ENCODE measurements at regions of chr7 and their contacts with region 1.

Region 1: DNA sequence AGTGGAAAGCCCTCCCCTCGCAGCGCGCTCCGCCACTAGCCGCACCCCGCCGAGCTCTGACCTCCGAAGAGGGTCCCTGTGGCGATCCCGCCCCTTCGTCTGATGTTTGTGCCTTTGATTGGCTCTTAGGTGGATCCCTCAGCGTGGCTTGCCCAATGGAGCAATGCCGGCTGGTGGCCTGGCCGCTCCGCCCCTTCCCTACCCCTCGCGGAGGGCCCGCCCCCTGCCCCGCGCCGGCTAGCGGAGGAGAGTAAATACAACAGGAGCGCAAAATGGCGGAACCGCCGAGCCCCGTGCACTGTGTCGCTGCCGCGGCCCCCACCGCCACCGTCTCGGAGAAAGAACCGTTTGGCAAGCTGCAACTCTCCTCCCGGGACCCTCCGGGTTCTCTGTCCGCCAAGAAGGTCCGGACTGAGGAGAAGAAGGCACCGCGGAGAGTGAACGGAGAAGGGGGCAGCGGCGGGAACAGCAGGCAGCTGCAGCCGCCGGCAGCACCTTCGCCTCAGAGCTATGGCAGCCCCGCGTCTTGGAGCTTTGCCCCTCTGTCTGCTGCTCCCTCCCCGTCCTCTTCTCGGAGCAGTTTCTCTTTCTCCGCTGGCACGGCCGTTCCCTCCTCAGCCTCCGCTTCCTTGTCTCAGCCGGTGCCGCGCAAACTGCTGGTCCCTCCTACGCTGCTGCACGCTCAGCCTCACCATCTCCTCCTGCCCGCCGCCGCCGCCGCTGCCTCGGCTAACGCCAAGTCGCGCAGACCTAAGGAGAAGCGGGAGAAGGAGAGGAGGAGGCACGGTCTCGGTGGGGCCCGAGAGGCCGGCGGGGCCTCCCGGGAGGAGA is at the start of gene RSBN1L:
- DNase-seq: peak; percentile 99
- ATAC-seq: peak; percentile 99 to 100 (median 99)
- H3K4me3 ChIP-seq: peak within 1 kb of the TSS; percentile 79 to 100 (median 97)
- H3K27ac ChIP-seq: peak within 1 kb of the TSS; percentile 88 to 98 (median 96)
- H3K4me1 ChIP-seq: peaks cover 0 to 57% (median 34%) of the 10 kb centered on the region in 12 donors
- H3K27me3 ChIP-seq: no peaks in the 10 kb centered on the region
- CTCF ChIP-seq: peak in 9 of 12 donors; percentile 22 to 65 (median 46)
- POLR2A ChIP-seq: peak; percentile 74 to 93
- total RNA-seq, gene RSBN1L: 5.6 to 12.1 (median 9.9) TPM

Region 2: DNA sequence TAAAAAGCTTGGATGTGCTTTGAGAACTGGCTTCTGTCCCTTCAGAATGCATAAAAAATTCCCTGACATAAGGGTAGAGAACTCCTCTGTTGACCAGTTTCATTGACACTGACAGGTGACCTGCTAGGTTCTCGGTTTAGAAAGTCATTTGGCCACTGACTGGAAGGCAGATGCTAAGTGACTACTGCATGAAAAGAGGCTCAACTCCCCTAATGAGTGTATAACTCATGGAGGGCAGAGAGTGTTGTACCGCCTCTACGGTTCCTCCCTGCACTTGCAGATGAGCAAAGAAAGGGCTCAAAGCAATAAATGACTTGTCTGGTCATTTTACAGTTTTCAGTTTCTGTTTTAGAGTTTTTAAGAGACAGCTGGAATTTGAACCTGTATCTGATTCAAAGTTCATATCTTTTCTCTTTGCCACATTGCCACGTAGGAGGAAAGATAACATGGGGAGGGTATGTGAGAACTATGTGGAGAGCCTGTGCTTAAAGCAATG is 493.9 kb before region 1 on chr7:
- intact Hi-C with region 1: no loop called
- DNase-seq: no peak
- ATAC-seq: no peak
- H3K4me3 ChIP-seq: no peak overlapping the region
- H3K27ac ChIP-seq: no peak overlapping the region
- H3K4me1 ChIP-seq: peaks cover 0 to 31% (median 1%) of the 10 kb centered on the region in 12 donors
- H3K27me3 ChIP-seq: no peaks in the 10 kb centered on the region
- CTCF ChIP-seq: no peak
- POLR2A ChIP-seq: no peak

Region 3: DNA sequence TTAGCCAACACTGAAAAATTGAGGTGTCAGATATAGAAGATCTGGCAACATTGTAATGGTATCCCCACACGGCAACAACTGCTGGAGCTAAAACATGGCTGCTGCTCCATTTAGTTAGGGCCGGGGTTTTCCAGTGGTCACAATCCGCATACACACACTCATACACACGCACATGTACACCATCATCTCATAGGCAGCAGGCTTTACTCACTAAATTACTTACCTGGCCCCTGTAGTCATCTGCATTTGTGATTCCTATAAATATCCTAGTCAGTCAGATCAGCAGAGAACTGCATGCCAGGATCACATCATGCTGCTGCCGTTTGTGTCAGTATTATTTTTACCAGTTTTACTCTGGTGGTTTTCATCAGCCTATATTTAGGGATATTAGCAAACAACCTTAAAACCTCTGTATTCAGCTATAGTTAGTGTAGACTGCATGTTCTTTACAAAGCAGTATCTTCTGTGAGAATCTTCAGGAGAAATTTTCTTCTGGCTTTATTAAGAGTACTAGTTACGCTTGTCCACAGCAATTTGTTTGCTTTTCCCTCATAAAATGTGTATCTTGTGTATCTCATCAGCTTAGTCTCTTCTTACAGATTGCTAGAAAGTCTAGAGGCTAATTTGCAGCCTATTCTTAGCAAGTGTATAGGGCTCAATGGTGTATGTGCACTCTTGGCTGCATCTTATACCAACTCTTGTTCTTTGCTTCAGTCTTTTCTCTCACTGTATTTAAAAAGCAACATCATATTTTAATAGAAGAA is 197.6 kb before region 1 on chr7:
- intact Hi-C with region 1: no loop called
- DNase-seq: no peak
- ATAC-seq: peak in 2 of 4 donors; percentile 20 to 38
- H3K4me3 ChIP-seq: no peak overlapping the region
- H3K27ac ChIP-seq: no peak overlapping the region
- H3K4me1 ChIP-seq: peaks cover 0 to 15% (median 3%) of the 10 kb centered on the region in 12 donors
- H3K27me3 ChIP-seq: no peaks in the 10 kb centered on the region
- CTCF ChIP-seq: no peak
- POLR2A ChIP-seq: no peak

Region 4: GRCh38 chr7:77550586-77550985 is 145.8 kb before region 1 on chr7:
- intact Hi-C with region 1: no loop called
- DNase-seq: no peak
- ATAC-seq: no peak
- H3K4me3 ChIP-seq: no peak overlapping the region
- H3K27ac ChIP-seq: peak overlapping the region in 1 of 12 donors; percentile 11
- H3K4me1 ChIP-seq: peaks cover 0 to 88% (median 40%) of the 10 kb centered on the region in 12 donors
- H3K27me3 ChIP-seq: no peaks in the 10 kb centered on the region
- CTCF ChIP-seq: no peak
- POLR2A ChIP-seq: no peak

Region 5: GRCh38 chr7:77606562-77606961 is 89.9 kb before region 1 on chr7:
- intact Hi-C with region 1: no loop called
- DNase-seq: no peak
- ATAC-seq: no peak
- H3K4me3 ChIP-seq: no peak overlapping the region
- H3K27ac ChIP-seq: no peak overlapping the region
- H3K4me1 ChIP-seq: no peaks in the 10 kb centered on the region
- H3K27me3 ChIP-seq: no peaks in the 10 kb centered on the region
- CTCF ChIP-seq: no peak
- POLR2A ChIP-seq: no peak

Region 6: DNA sequence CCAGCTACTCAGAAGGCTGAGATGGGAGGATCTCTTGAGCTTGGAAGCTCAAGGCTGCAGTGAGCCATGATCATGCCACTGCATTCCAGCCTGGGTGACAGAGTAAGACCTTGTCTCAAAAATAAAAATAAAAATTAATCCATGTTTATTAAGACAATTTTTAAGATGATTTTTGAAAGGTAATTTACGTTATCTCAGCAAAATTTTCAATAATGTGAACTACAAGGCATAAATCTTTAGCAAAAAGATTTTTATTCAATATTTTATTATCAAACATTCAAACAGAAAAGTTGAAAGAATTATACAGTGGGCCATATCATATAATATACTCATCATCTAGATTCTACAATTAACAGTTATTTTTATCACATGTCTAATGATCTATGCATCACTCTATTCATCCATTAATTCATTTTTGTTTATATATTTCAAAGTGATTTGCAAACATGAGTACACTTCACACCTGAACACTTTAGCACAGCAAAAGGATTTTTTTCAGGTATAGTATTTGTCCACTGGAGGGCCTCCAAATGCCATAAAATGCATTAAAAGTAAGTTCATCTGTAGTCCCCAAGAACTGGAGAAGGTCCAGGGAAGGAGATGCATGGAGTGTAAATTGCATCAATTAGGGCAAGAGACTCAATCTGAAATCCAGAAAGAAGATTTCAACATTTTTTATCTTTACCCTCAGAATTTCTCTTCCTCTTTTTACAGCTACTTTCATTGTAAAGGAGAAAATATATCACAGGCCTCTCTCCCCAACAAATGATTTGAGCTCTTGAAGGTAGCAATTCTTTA is 38.8 kb before region 1 on chr7:
- intact Hi-C with region 1: loop called in 1 of 10 experiments (anchors 5 kb)
- DNase-seq: no peak
- ATAC-seq: peak in 1 of 4 donors; percentile 32
- H3K4me3 ChIP-seq: no peak overlapping the region
- H3K27ac ChIP-seq: no peak overlapping the region
- H3K4me1 ChIP-seq: peaks cover 0 to 3% (median 0%) of the 10 kb centered on the region in 12 donors
- H3K27me3 ChIP-seq: no peaks in the 10 kb centered on the region
- CTCF ChIP-seq: peak; percentile 19 to 60 (median 46)
- POLR2A ChIP-seq: no peak

Region 7: DNA sequence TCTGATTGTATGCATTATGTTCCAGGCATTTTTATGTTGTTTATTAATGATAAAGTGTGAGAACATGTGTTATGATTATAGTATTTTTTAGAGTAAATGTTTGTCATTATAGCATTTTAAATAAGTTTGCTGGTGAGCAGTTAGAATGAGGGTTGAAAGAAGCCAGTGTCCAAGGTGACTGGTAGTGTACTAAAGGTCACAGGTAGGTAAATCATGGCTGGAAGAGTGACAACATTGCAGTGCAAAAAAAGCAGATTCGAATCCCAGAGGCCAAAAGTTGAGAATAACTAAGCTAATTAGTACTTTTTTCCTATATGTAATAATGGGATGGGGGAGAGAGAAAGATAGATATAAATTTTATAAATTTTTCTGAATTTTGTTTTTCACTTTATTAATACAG is 43.8 kb after region 1 on chr7:
- intact Hi-C with region 1: loop called in 2 of 10 experiments (anchors 5 to 10 kb)
- DNase-seq: no peak
- ATAC-seq: no peak
- H3K4me3 ChIP-seq: no peak overlapping the region
- H3K27ac ChIP-seq: no peak overlapping the region
- H3K4me1 ChIP-seq: peaks cover 0 to 11% (median 4%) of the 10 kb centered on the region in 12 donors
- H3K27me3 ChIP-seq: no peaks in the 10 kb centered on the region
- CTCF ChIP-seq: no peak
- POLR2A ChIP-seq: no peak

Region 8: GRCh38 chr7:77752021-77752420 is 55.6 kb after region 1 on chr7:
- intact Hi-C with region 1: loop called in 6 of 10 experiments (anchors 5 to 10 kb)
- DNase-seq: no peak
- ATAC-seq: peak in 2 of 4 donors; percentile 60 to 68
- H3K4me3 ChIP-seq: no peak overlapping the region
- H3K27ac ChIP-seq: no peak overlapping the region
- H3K4me1 ChIP-seq: peaks cover 0 to 25% (median 2%) of the 10 kb centered on the region in 12 donors
- H3K27me3 ChIP-seq: no peaks in the 10 kb centered on the region
- CTCF ChIP-seq: no peak
- POLR2A ChIP-seq: no peak

Region 9: GRCh38 chr7:77759294-77759889 is 63.0 kb after region 1 on chr7:
- intact Hi-C with region 1: loop called in 5 of 10 experiments (anchors 5 to 10 kb)
- DNase-seq: peak in 2 of 5 donors; percentile 52
- ATAC-seq: peak in 3 of 4 donors; percentile 57 to 77 (median 74)
- H3K4me3 ChIP-seq: no peak overlapping the region
- H3K27ac ChIP-seq: peak overlapping the region in 1 of 12 donors; percentile 17
- H3K4me1 ChIP-seq: peaks cover 0 to 36% (median 7%) of the 10 kb centered on the region in 12 donors
- H3K27me3 ChIP-seq: no peaks in the 10 kb centered on the region
- CTCF ChIP-seq: peak; percentile 71 to 92 (median 83)
- POLR2A ChIP-seq: no peak

Region 10: GRCh38 chr7:77798394-77799077 is 102.1 kb after region 1 on chr7 and contains the starts of genes PHTF2 and TMEM60:
- intact Hi-C with region 1: loop called in 2 of 10 experiments (anchors 1 to 2 kb)
- DNase-seq: peak; percentile 98 to 99 (median 99)
- ATAC-seq: peak; percentile 96 to 98 (median 98)
- H3K4me3 ChIP-seq: peak within 1 kb of the TSS; percentile 65 to 98 (median 88)
- H3K27ac ChIP-seq: peak within 1 kb of the TSS; percentile 70 to 92 (median 88)
- H3K4me1 ChIP-seq: peaks cover 0 to 80% (median 26%) of the 10 kb centered on the region in 12 donors
- H3K27me3 ChIP-seq: no peaks in the 10 kb centered on the region
- CTCF ChIP-seq: peak; percentile 15 to 70 (median 38)
- POLR2A ChIP-seq: peak in 1 of 2 donors; percentile 72
- total RNA-seq, gene PHTF2: 20.5 to 47.2 (median 24.2) TPM
- total RNA-seq, gene TMEM60: 5.4 to 13.2 (median 8.2) TPM

Measured in heart left ventricle (tissue), 16 donors.